Activated T-helper 1 cell treated with anti-CD3 and anti-CD28 coated beads, Interleukin-12 subunit alpha, Interleukin-12 subunit beta, Interleukin-2, Interleukin-4 antibody, amounts not matched to agents 30 ng/mL and 10 ng/mL and 1 ng/mL, durations not matched to agents 14 hours and 24 hours and 36 hours (primary cell): ENCODE measurements at regions of chr6 and their contacts with region 1.

Region 1: DNA sequence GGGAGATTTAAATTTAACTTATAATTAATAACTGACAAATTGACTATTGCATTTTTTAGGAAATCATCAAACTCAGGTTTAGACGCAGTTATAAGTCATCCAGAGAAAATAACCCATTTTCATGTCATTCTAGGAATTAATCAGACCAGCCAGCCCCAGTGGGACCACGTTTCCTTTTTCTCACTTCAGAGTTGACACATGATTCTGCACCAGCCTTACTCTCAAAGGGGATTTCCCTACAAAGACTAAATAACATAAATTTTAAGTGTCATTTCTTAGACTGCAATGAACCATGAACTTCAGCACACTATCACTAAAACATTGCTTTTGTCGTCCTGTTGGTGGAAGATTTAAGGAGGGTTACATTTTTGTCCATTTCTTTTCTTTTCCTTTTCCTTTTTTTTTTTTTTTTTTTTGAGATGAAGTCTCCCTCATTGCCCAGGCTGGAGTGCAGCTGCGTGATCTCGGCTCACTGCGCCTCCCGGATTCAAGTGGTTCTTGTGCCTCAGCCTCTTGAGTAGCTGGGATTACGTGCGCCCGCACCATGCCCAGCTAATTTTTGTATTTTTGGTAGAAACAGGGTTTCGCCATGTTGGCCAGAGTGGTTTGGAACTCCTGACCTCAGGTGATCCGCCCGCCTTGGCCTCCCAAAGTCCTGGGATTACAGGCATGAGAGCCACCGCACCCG is 3.6 kb downstream of the IPCEF1 start:
- DNase-seq: no peak
- H3K4me3 Mint-ChIP-seq: no peak overlapping the region
- H3K27ac Mint-ChIP-seq: no peak overlapping the region
- H3K4me1 Mint-ChIP-seq: peaks cover 20% of the 10 kb centered on the region
- H3K27me3 Mint-ChIP-seq: peaks cover 19% of the 10 kb centered on the region

Region 2: GRCh38 chr6:153618805-153619215 is 734.2 kb before region 1 on chr6:
- intact Hi-C with region 1: no loop called
- DNase-seq: no peak
- H3K4me3 Mint-ChIP-seq: no peak overlapping the region
- H3K27ac Mint-ChIP-seq: no peak overlapping the region
- H3K4me1 Mint-ChIP-seq: no peaks in the 10 kb centered on the region
- H3K27me3 Mint-ChIP-seq: no peaks in the 10 kb centered on the region

Region 3: DNA sequence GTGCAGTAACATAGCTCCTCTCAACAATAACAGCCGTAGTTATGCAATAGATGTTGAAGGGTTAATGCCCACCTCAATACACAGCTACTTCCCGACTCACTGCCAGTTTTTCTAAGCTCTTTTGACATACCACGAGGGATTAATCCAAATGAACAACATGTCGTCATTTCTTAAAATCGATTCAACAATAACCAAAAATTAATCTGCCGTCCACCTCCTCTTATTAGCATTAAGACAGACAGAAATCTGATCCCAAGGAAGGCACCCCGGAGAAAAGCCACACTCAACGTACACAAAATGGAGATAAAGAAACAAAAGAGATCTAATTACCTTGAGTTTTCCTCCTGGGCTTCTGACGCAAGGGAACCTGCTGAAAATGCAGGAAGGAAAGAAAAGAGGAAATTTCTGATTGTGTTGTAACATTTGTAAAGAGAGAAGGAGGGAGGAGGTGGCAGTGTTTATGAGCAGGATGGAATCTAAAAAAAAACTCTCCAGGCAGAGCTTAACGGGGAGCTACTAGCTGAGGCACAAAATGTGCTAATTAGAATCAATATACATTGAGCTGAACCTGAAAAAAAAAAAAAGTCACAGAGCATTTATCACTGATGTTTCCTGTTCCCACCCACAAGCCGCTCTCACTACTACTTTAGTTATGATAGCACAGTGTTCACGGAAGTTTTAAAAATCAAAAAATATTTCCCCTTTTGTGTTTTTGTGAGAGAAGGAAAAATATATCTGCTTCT is 105.8 kb before region 1 on chr6:
- intact Hi-C with region 1: loop called (anchors 1 kb)
- DNase-seq: no peak
- H3K4me3 Mint-ChIP-seq: peak overlapping the region; percentile 85
- H3K27ac Mint-ChIP-seq: peak overlapping the region; percentile 76
- H3K4me1 Mint-ChIP-seq: peaks cover 87% of the 10 kb centered on the region
- H3K27me3 Mint-ChIP-seq: no peaks in the 10 kb centered on the region

Region 4: DNA sequence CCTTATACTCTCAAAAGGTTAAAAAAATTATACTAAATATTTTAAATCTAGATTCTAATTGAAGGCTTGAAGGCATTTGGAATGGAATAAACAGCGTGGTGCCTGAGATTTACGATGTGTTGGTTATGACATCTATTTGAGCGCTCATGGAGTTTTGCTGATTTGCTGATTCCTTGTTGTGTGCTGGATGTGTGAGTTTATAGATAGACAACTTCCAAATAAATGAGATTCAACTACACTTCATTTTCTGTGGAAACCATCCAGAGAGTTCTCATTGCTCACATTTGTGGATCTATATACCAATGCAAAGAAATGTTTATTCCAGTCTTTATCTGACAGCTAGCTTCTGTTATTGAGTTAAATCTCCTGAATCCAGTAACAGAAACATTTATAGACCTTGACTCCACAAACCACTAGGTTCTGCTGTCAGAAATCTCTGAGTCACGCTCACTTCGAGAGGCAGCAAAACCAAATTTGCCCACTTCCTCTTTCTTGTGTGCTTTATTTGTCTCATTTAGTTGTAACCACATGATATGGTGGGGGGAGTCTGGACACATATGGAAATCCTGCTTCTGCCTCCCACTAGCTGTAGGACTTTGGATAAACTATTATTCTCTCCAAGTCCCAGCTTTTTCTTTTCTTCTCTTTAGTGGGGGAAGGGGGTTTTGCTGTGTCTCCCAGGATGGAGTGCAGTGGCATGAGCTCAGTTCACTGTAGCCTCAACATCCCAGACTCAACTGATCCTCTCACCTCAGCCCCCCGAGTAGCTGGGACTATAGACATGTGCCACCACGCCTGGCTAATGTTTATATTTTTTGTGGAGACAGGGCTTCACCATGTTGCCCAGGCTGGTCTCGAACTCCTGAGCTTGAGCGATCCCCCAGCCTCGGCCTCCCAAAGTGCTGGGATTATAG is 50.9 kb before region 1 on chr6:
- intact Hi-C with region 1: loop called (anchors 2 kb)
- DNase-seq: no peak
- H3K4me3 Mint-ChIP-seq: no peak overlapping the region
- H3K27ac Mint-ChIP-seq: peak overlapping the region; percentile 6
- H3K4me1 Mint-ChIP-seq: peaks cover 7% of the 10 kb centered on the region
- H3K27me3 Mint-ChIP-seq: peaks cover 17% of the 10 kb centered on the region

Region 5: DNA sequence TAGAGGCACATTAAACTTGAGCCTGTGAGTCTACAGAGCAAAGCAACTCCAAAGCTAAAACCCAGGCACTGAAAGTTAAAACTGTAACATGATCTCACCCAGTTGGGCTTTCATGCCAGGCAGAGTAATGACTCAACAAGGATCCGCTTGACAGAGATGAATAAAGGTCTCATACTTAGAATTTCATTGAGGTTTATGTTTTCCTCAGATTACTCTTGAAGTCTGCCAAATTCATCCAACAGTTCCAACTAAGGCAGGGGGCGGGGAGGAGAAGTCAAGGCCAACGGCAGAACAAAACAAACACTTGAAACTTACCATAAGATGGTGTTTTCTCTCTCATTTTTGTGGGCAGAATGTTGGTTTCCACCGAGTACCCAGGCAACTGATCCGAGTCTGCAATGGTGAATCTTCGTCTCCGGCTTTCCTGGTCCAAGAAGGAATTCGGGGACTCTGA is 57.6 kb after region 1 on chr6:
- intact Hi-C with region 1: loop called (anchors 1 kb)
- DNase-seq: no peak
- H3K4me3 Mint-ChIP-seq: no peak overlapping the region
- H3K27ac Mint-ChIP-seq: peak overlapping the region; percentile 15
- H3K4me1 Mint-ChIP-seq: peaks cover 6% of the 10 kb centered on the region
- H3K27me3 Mint-ChIP-seq: peaks cover 6% of the 10 kb centered on the region